ENCODE measurements at regions of chr7 and their contacts with region 1.

Region 1: GRCh38 chr7:158407581-158408317 is 179.9 kb downstream of the PTPRN2 start:
- DNase-seq: peak; percentile 74
- H3K4me3 ChIP-seq: no peak overlapping the region; a peak in 1 of 4 replicates
- H3K27ac ChIP-seq: no peak overlapping the region; a peak in 1 of 4 replicates
- H3K4me1 ChIP-seq: peaks cover 0 to 7% of the 10 kb centered on the region in 2 experiments; a peak in 1 of 4 replicates
- H3K27me3 ChIP-seq: no peaks in the 10 kb centered on the region
- CTCF ChIP-seq: peak; percentile 26; the same call in 1 of the 2 replicates
- EP300 ChIP-seq: no peak
- RAD21 ChIP-seq: peak; percentile 86

Region 2: GRCh38 chr7:158204453-158204852 is 203.3 kb before region 1 on chr7:
- CTCF ChIA-PET with region 1: no interaction called
- POLR2A ChIA-PET with region 1: no interaction called
- DNase-seq: no peak
- H3K4me3 ChIP-seq: no peak overlapping the region
- H3K27ac ChIP-seq: no peak overlapping the region
- H3K4me1 ChIP-seq: no peaks in the 10 kb centered on the region
- H3K27me3 ChIP-seq: no peaks in the 10 kb centered on the region
- CTCF ChIP-seq: no peak
- EP300 ChIP-seq: no peak
- RAD21 ChIP-seq: no peak

Region 3: DNA sequence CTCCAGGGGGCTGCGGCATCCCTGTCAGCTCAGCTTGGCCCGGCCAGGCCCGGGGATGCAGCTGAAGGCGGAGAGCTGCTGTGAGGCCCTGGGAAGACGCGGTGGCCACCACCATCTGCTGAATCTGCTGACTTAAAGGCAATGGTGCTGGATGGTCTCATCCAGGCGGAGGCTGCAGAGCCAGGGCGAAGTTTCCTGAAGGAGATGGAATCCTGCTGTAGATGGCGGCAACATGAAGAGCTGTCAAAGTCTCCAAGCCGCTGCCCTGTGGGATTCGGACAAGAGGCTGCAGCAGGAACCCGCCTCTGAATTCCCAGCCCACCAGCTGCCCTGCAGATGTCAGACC is 20.2 kb before region 1 on chr7:
- CTCF ChIA-PET with region 1: interaction called, 10 read pairs
- POLR2A ChIA-PET with region 1: no interaction called
- DNase-seq: no peak
- H3K4me3 ChIP-seq: no peak overlapping the region
- H3K27ac ChIP-seq: no peak overlapping the region
- H3K4me1 ChIP-seq: peaks cover 0 to 10% of the 10 kb centered on the region in 2 experiments; a peak in 1 of 4 replicates
- H3K27me3 ChIP-seq: no peaks in the 10 kb centered on the region
- CTCF ChIP-seq: no peak
- EP300 ChIP-seq: no peak
- RAD21 ChIP-seq: no peak

Region 4: GRCh38 chr7:158395780-158396278 is 11.9 kb before region 1 on chr7:
- CTCF ChIA-PET with region 1: interaction called, 15 read pairs
- POLR2A ChIA-PET with region 1: no interaction called
- DNase-seq: no peak
- H3K4me3 ChIP-seq: no peak overlapping the region
- H3K27ac ChIP-seq: no peak overlapping the region
- H3K4me1 ChIP-seq: peaks cover 0 to 19% of the 10 kb centered on the region in 2 experiments; a peak in 1 of 4 replicates
- H3K27me3 ChIP-seq: no peaks in the 10 kb centered on the region
- CTCF ChIP-seq: no peak
- EP300 ChIP-seq: no peak
- RAD21 ChIP-seq: no peak

Region 5: GRCh38 chr7:158422887-158423560 is 15.3 kb after region 1 on chr7:
- CTCF ChIA-PET with region 1: interaction called, 42 read pairs
- POLR2A ChIA-PET with region 1: interaction called, 4 read pairs
- DNase-seq: no peak
- H3K4me3 ChIP-seq: no peak overlapping the region
- H3K27ac ChIP-seq: no peak overlapping the region
- H3K4me1 ChIP-seq: peaks cover 0 to 24% of the 10 kb centered on the region in 2 experiments; a peak in 2 of 4 replicates
- H3K27me3 ChIP-seq: no peaks in the 10 kb centered on the region
- CTCF ChIP-seq: no peak
- EP300 ChIP-seq: no peak
- RAD21 ChIP-seq: no peak

Measured in SK-N-SH (cell line).